Activated CD4-positive, alpha-beta memory T cell treated with anti-CD3 and anti-CD28 coated beads for 36 hours (primary cell): ENCODE measurements at regions of chr6 and their contacts with region 1.

Region 1: GRCh38 chr6:636488-636887 is 20.4 kb downstream of the HUS1B start:
- DNase-seq: peak; percentile 16
- H3K4me3 Mint-ChIP-seq: no peak overlapping the region
- H3K27ac Mint-ChIP-seq: no peak overlapping the region
- H3K4me1 Mint-ChIP-seq: peaks cover 20% of the 10 kb centered on the region
- H3K27me3 Mint-ChIP-seq: no peaks in the 10 kb centered on the region

Region 2: DNA sequence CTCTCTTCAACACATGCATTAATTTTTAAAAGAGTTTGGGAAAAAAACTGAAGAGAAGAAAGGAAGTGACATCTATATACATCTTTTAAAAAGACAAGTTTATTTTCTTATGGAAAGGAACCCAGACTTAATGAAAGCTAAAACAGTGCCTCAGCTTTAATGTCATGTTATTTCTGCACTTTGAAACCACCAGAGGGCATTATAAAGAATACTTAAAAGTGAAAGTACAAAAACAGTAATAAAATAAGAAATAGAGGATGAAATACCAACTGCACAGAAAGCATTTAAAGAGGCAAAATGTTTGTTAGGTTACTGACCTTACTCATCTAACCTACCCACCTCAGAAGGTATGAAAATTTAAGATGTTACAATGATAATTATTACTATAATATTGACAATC is 78.4 kb before region 1 on chr6:
- CTCF ChIA-PET with region 1: no interaction called
- POLR2A ChIA-PET with region 1: no interaction called
- intact Hi-C with region 1: loop called (anchors 2 kb)
- DNase-seq: no peak
- H3K4me3 Mint-ChIP-seq: no peak overlapping the region
- H3K27ac Mint-ChIP-seq: peak overlapping the region; percentile 87
- H3K4me1 Mint-ChIP-seq: peaks cover 60% of the 10 kb centered on the region
- H3K27me3 Mint-ChIP-seq: no peaks in the 10 kb centered on the region

Region 3: GRCh38 chr6:659716-660581 is 23.5 kb after region 1 on chr6:
- CTCF ChIA-PET with region 1: no interaction called
- POLR2A ChIA-PET with region 1: no interaction called
- intact Hi-C with region 1: no loop called
- DNase-seq: no peak
- H3K4me3 Mint-ChIP-seq: no peak overlapping the region
- H3K27ac Mint-ChIP-seq: no peak overlapping the region
- H3K4me1 Mint-ChIP-seq: peaks cover 59% of the 10 kb centered on the region
- H3K27me3 Mint-ChIP-seq: no peaks in the 10 kb centered on the region

Region 4: DNA sequence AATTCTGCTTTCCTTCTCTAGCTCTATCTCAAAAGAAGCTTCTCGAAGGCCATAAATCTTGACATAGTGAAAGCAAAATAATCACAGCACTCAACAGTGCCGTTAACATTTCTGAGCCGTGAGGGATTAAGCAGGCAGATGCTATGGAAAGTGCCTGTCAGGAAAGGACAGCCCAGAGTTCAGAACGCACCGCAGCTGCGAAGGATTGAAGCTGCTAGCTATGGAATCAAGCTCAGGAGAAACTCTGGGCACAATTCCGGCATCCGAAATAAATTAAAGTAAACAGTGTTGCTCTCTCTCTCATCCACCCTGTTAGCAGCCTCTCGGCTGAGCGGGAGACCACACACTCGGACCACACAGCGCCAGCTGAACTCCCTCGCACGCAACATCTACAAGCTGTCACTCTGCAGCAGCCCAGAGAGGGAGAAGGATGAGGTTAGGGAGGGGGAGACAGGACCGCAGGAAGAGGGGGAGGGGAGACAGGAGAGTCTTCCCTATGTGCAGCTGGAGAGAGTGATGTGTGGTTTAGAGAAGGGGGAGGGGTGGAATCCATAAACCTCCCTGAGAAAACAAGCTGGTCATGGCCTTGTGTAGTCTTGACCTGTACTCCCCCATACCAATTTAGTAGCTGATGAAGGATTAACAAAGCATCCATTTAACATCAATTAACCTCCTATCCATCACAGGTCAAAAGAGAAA is 47.4 kb after region 1 on chr6:
- CTCF ChIA-PET with region 1: interaction called, 6 read pairs
- POLR2A ChIA-PET with region 1: interaction called, 10 read pairs
- intact Hi-C with region 1: loop called (anchors 1 kb)
- DNase-seq: no peak
- H3K4me3 Mint-ChIP-seq: no peak overlapping the region
- H3K27ac Mint-ChIP-seq: no peak overlapping the region
- H3K4me1 Mint-ChIP-seq: peaks cover 51% of the 10 kb centered on the region
- H3K27me3 Mint-ChIP-seq: no peaks in the 10 kb centered on the region

Region 5: DNA sequence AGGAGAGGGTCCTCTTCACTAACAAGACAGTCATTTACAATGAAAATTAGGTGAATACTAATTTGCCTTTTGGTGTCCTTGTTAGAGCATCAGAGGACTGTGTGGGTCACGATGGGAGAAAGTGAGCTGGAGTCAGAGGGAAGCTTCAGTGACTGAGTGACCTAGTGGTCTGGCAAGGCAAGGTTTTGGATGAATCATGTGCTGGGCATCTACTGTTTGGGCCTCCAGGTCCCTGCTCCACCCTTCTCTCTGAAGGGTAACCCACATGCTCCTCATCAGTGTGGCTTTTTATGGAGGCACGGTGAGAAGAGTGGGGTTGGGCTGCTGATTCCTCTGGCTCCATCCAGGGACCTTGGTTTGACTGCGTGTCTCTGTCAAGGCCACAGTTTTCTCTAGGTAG is 117.0 kb after region 1 on chr6:
- CTCF ChIA-PET with region 1: no interaction called
- POLR2A ChIA-PET with region 1: no interaction called
- intact Hi-C with region 1: no loop called
- DNase-seq: no peak
- H3K4me3 Mint-ChIP-seq: no peak overlapping the region
- H3K27ac Mint-ChIP-seq: no peak overlapping the region
- H3K4me1 Mint-ChIP-seq: no peaks in the 10 kb centered on the region
- H3K27me3 Mint-ChIP-seq: no peaks in the 10 kb centered on the region